BJ (cell line): ENCODE measurements at regions of chr16 and their contacts with region 1.

Region 1: GRCh38 chr16:51982715-51983680 is 563.9 kb downstream of the TOX3 start:
- DNase-seq: no peak
- H3K4me3 ChIP-seq: no peak overlapping the region
- H3K27me3 ChIP-seq: no peaks in the 10 kb centered on the region
- CTCF ChIP-seq: peak; percentile 69

Region 2: DNA sequence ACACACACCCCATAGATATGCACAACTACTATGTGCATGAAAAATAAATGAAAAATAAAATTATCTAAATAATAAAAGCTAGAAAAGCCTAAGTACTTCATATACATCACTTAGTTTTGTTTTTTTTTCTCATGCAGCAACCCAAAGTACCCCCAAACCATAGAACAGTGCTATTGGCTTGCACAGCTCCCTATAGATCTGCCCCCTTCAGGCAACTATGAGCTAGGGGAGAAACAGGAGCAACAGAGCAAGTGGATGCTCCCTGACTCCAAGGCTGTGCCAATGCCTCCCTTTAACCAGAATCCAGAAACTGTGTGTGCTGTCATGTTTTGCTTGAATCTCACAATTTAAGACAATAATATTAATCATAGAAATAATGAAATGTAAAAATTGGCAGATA is 41.6 kb before region 1 on chr16:
- CTCF ChIA-PET with region 1: no interaction called
- POLR2A ChIA-PET with region 1: no interaction called
- DNase-seq: no peak
- H3K4me3 ChIP-seq: no peak overlapping the region
- H3K27me3 ChIP-seq: no peaks in the 10 kb centered on the region
- CTCF ChIP-seq: no peak

Region 3: GRCh38 chr16:51971184-51971583 is 11.8 kb before region 1 on chr16:
- CTCF ChIA-PET with region 1: interaction called, 16 read pairs
- POLR2A ChIA-PET with region 1: no interaction called
- DNase-seq: no peak
- H3K4me3 ChIP-seq: no peak overlapping the region
- H3K27me3 ChIP-seq: no peaks in the 10 kb centered on the region
- CTCF ChIP-seq: peak; percentile 43; the same call in 1 of the 2 replicates

Region 4: GRCh38 chr16:52078716-52079655 is 96.0 kb after region 1 on chr16:
- CTCF ChIA-PET with region 1: no interaction called
- POLR2A ChIA-PET with region 1: no interaction called
- DNase-seq: no peak
- H3K4me3 ChIP-seq: no peak overlapping the region
- H3K27me3 ChIP-seq: no peaks in the 10 kb centered on the region
- CTCF ChIP-seq: no peak